IMR-90 (cell line): ENCODE measurements at regions of chr1 and their contacts with region 1.

Region 1: GRCh38 chr1:75053207-75053606 is 81.0 kb upstream of the LHX8 start:
- DNase-seq: no peak
- ATAC-seq: no peak
- H3K4me3 ChIP-seq: no peak overlapping the region
- H3K27ac ChIP-seq: no peak overlapping the region
- H3K4me1 ChIP-seq: no peaks in the 10 kb centered on the region
- H3K27me3 ChIP-seq: no peaks in the 10 kb centered on the region
- CTCF ChIP-seq: no peak
- POLR2A ChIP-seq: no peak
- RAD21 ChIP-seq: no peak

Region 2: GRCh38 chr1:74908797-74909196 is 144.4 kb before region 1 on chr1:
- CTCF ChIA-PET with region 1: no interaction called
- POLR2A ChIA-PET with region 1: no interaction called
- dilution Hi-C with region 1: no loop called
- in situ Hi-C with region 1: no loop called
- intact Hi-C with region 1: no loop called
- DNase-seq: no peak
- ATAC-seq: no peak
- H3K4me3 ChIP-seq: no peak overlapping the region
- H3K27ac ChIP-seq: no peak overlapping the region
- H3K4me1 ChIP-seq: no peaks in the 10 kb centered on the region
- H3K27me3 ChIP-seq: no peaks in the 10 kb centered on the region
- CTCF ChIP-seq: no peak
- POLR2A ChIP-seq: no peak
- RAD21 ChIP-seq: no peak

Region 3: DNA sequence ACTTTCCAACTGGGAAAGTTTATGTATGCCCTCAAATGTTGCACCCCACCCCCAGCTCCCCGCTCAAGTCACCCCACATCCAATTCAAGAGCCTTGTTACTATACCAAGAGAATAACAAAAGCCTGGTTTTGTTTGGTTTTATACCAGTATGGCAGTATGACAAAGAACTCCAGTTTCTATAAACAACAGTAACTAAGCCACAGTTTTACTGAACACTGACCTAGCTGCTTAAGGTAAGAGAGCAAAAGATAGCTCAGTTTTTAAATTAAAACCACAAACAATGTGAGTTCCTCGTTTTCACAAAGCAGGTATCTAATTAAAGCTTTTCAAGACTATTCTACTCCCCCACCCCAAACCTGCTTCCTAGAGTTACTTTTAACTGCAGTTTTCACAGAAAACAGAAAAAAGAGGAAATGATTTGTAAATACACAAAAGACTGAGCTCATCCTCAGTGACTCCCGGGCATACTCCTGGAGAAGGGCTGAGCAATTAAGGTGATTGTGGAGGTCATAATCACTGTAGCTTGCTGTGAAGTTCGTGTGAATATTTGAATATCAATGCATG is 21.7 kb after region 1 on chr1:
- CTCF ChIA-PET with region 1: no interaction called
- POLR2A ChIA-PET with region 1: no interaction called
- dilution Hi-C with region 1: no loop called
- in situ Hi-C with region 1: no loop called
- intact Hi-C with region 1: no loop called
- DNase-seq: no peak
- ATAC-seq: no peak
- H3K4me3 ChIP-seq: no peak overlapping the region
- H3K27ac ChIP-seq: no peak overlapping the region
- H3K4me1 ChIP-seq: no peaks in the 10 kb centered on the region
- H3K27me3 ChIP-seq: no peaks in the 10 kb centered on the region
- CTCF ChIP-seq: no peak
- POLR2A ChIP-seq: no peak
- RAD21 ChIP-seq: no peak

Region 4: DNA sequence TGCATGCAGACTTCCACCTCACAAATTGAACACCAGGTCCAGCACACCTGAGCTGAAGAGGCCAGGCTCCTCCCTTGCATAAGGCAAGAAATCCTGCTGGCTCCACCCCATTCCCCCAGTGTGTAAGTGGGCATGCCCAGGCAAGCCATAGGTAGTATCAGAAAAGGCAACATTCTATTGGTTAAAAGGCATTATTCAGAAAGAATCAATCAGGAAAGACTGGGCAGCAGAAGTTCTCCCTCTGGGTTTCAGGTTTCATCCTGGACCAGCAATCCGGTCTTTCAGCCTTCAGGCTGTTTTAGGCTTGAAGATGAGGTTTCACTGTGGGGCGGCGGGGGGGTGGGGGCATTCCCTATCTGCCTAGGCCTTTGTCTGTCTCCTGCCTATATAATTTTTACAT is 38.9 kb after region 1 on chr1:
- CTCF ChIA-PET with region 1: no interaction called
- POLR2A ChIA-PET with region 1: no interaction called
- dilution Hi-C with region 1: no loop called
- in situ Hi-C with region 1: no loop called
- intact Hi-C with region 1: loop called (anchors 1 kb)
- DNase-seq: no peak
- ATAC-seq: no peak
- H3K4me3 ChIP-seq: no peak overlapping the region
- H3K27ac ChIP-seq: no peak overlapping the region
- H3K4me1 ChIP-seq: no peaks in the 10 kb centered on the region
- H3K27me3 ChIP-seq: no peaks in the 10 kb centered on the region
- CTCF ChIP-seq: no peak
- POLR2A ChIP-seq: no peak
- RAD21 ChIP-seq: no peak